GM12878 (cell line): ENCODE measurements at regions of chr2 and their contacts with region 1.

Region 1: GRCh38 chr2:28821295-28821958 is 10.8 kb downstream of the SPDYA start:
- DNase-seq: peak; percentile 25
- ATAC-seq: peak; percentile 89
- H3K4me3 ChIP-seq: no peak overlapping the region
- H3K27ac ChIP-seq: no peak overlapping the region
- H3K4me1 ChIP-seq: no peaks in the 10 kb centered on the region
- H3K27me3 ChIP-seq: no peaks in the 10 kb centered on the region
- CTCF ChIP-seq: peak; percentile 65 to 75 (median 67)
- EP300 ChIP-seq: no peak
- POLR2A ChIP-seq: no peak
- RAD21 ChIP-seq: peak; percentile 79

Region 2: GRCh38 chr2:28772307-28772706 is 49.1 kb before region 1 on chr2:
- CTCF ChIA-PET with region 1: no interaction called
- POLR2A ChIA-PET with region 1: no interaction called
- RAD21 ChIA-PET with region 1: no interaction called
- SMC1A ChIA-PET with region 1: no interaction called
- in situ Hi-C with region 1: no loop called
- intact Hi-C with region 1: no loop called
- DNase-seq: no peak
- ATAC-seq: no peak
- H3K4me3 ChIP-seq: no peak overlapping the region
- H3K27ac ChIP-seq: no peak overlapping the region
- H3K4me1 ChIP-seq: no peaks in the 10 kb centered on the region
- H3K27me3 ChIP-seq: no peaks in the 10 kb centered on the region
- CTCF ChIP-seq: no peak
- EP300 ChIP-seq: no peak
- POLR2A ChIP-seq: no peak
- RAD21 ChIP-seq: no peak

Region 3: GRCh38 chr2:28810384-28811285 is 10.8 kb before region 1 on chr2 and contains the start of gene SPDYA:
- CTCF ChIA-PET with region 1: interaction called, 9 read pairs
- POLR2A ChIA-PET with region 1: interaction called, 3 read pairs
- RAD21 ChIA-PET with region 1: no interaction called
- SMC1A ChIA-PET with region 1: interaction called, 12 read pairs
- in situ Hi-C with region 1: no loop called
- intact Hi-C with region 1: no loop called
- DNase-seq: no peak
- ATAC-seq: peak; percentile 97
- H3K4me3 ChIP-seq: peak within 1 kb of the TSS; percentile 66
- H3K27ac ChIP-seq: no peak within 1 kb of the TSS
- H3K4me1 ChIP-seq: peaks cover 6% of the 10 kb centered on the region
- H3K27me3 ChIP-seq: no peaks in the 10 kb centered on the region
- CTCF ChIP-seq: no peak
- EP300 ChIP-seq: no peak
- POLR2A ChIP-seq: peak; percentile 27; the same call in 1 of the 2 replicates
- RAD21 ChIP-seq: no peak
- polyA plus RNA-seq, gene SPDYA: 1.1 to 2.4 TPM

Region 4: GRCh38 chr2:28880193-28880592 is 58.8 kb after region 1 on chr2:
- CTCF ChIA-PET with region 1: no interaction called
- POLR2A ChIA-PET with region 1: no interaction called
- RAD21 ChIA-PET with region 1: no interaction called
- SMC1A ChIA-PET with region 1: no interaction called
- in situ Hi-C with region 1: no loop called
- intact Hi-C with region 1: no loop called
- DNase-seq: no peak
- ATAC-seq: no peak
- H3K4me3 ChIP-seq: no peak overlapping the region
- H3K27ac ChIP-seq: no peak overlapping the region
- H3K4me1 ChIP-seq: no peaks in the 10 kb centered on the region
- H3K27me3 ChIP-seq: no peaks in the 10 kb centered on the region; a peak in 1 of 4 replicates
- CTCF ChIP-seq: no peak
- EP300 ChIP-seq: no peak
- POLR2A ChIP-seq: no peak
- RAD21 ChIP-seq: no peak

Region 5: GRCh38 chr2:28952816-28953211 is 131.4 kb after region 1 on chr2:
- CTCF ChIA-PET with region 1: interaction called, 3 read pairs
- POLR2A ChIA-PET with region 1: no interaction called
- RAD21 ChIA-PET with region 1: interaction called, 3 read pairs
- SMC1A ChIA-PET with region 1: interaction called, 4 read pairs
- in situ Hi-C with region 1: no loop called
- intact Hi-C with region 1: loop called (anchors 5 kb)
- DNase-seq: no peak
- ATAC-seq: peak; percentile 61
- H3K4me3 ChIP-seq: no peak overlapping the region
- H3K27ac ChIP-seq: no peak overlapping the region
- H3K4me1 ChIP-seq: no peaks in the 10 kb centered on the region
- H3K27me3 ChIP-seq: no peaks in the 10 kb centered on the region
- CTCF ChIP-seq: peak in 1 of 3 experiments; percentile 34; a peak in 1 of 6 replicates
- EP300 ChIP-seq: no peak
- POLR2A ChIP-seq: no peak
- RAD21 ChIP-seq: no peak

Region 6: GRCh38 chr2:29097569-29097968 is 276.1 kb after region 1 on chr2:
- CTCF ChIA-PET with region 1: no interaction called
- POLR2A ChIA-PET with region 1: no interaction called
- RAD21 ChIA-PET with region 1: no interaction called
- SMC1A ChIA-PET with region 1: no interaction called
- in situ Hi-C with region 1: no loop called
- intact Hi-C with region 1: no loop called
- DNase-seq: no peak
- ATAC-seq: no peak
- H3K4me3 ChIP-seq: no peak overlapping the region
- H3K27ac ChIP-seq: no peak overlapping the region
- H3K4me1 ChIP-seq: no peaks in the 10 kb centered on the region
- H3K27me3 ChIP-seq: no peaks in the 10 kb centered on the region
- CTCF ChIP-seq: no peak
- EP300 ChIP-seq: no peak
- POLR2A ChIP-seq: no peak
- RAD21 ChIP-seq: no peak